Activated CD4-positive, alpha-beta T cell treated with anti-CD3 and anti-CD28 coated beads for 36 hours (primary cell): ENCODE measurements at regions of chr13 and their contacts with region 1.

Region 1: GRCh38 chr13:23579072-23579895 is 9.1 kb downstream of the TNFRSF19 start:
- DNase-seq: peak; percentile 96
- ATAC-seq: peak; percentile 95
- H3K4me3 Mint-ChIP-seq: peak overlapping the region; percentile 71
- H3K27ac Mint-ChIP-seq: no peak overlapping the region
- H3K4me1 Mint-ChIP-seq: peaks cover 24% of the 10 kb centered on the region
- H3K27me3 Mint-ChIP-seq: peaks cover 33% of the 10 kb centered on the region

Region 2: GRCh38 chr13:23455392-23456185 is 123.7 kb before region 1 on chr13:
- CTCF ChIA-PET with region 1: no interaction called
- POLR2A ChIA-PET with region 1: no interaction called
- intact Hi-C with region 1: no loop called
- DNase-seq: no peak
- ATAC-seq: no peak
- H3K4me3 Mint-ChIP-seq: no peak overlapping the region
- H3K27ac Mint-ChIP-seq: no peak overlapping the region
- H3K4me1 Mint-ChIP-seq: no peaks in the 10 kb centered on the region
- H3K27me3 Mint-ChIP-seq: no peaks in the 10 kb centered on the region

Region 3: GRCh38 chr13:23466144-23467002 is 112.9 kb before region 1 on chr13:
- CTCF ChIA-PET with region 1: interaction called, 4 read pairs
- POLR2A ChIA-PET with region 1: no interaction called
- intact Hi-C with region 1: loop called (anchors 1 to 2 kb)
- DNase-seq: peak; percentile 78
- ATAC-seq: peak; percentile 92
- H3K4me3 Mint-ChIP-seq: peak overlapping the region; percentile 54
- H3K27ac Mint-ChIP-seq: no peak overlapping the region
- H3K4me1 Mint-ChIP-seq: peaks cover 12% of the 10 kb centered on the region
- H3K27me3 Mint-ChIP-seq: peaks cover 5% of the 10 kb centered on the region

Region 4: GRCh38 chr13:23752111-23753001 is 173.1 kb after region 1 on chr13:
- CTCF ChIA-PET with region 1: no interaction called
- POLR2A ChIA-PET with region 1: no interaction called
- intact Hi-C with region 1: loop called in 1 of 2 experiments (anchors 2 kb)
- DNase-seq: no peak
- ATAC-seq: peak; percentile 78
- H3K4me3 Mint-ChIP-seq: no peak overlapping the region
- H3K27ac Mint-ChIP-seq: no peak overlapping the region
- H3K4me1 Mint-ChIP-seq: peaks cover 44% of the 10 kb centered on the region
- H3K27me3 Mint-ChIP-seq: peaks cover 3% of the 10 kb centered on the region

Region 5: GRCh38 chr13:23871616-23872220 is 292.4 kb after region 1 on chr13:
- CTCF ChIA-PET with region 1: no interaction called
- POLR2A ChIA-PET with region 1: no interaction called
- intact Hi-C with region 1: loop called in 1 of 2 experiments (anchors 5 kb)
- DNase-seq: no peak
- ATAC-seq: no peak
- H3K4me3 Mint-ChIP-seq: no peak overlapping the region
- H3K27ac Mint-ChIP-seq: no peak overlapping the region
- H3K4me1 Mint-ChIP-seq: no peaks in the 10 kb centered on the region
- H3K27me3 Mint-ChIP-seq: no peaks in the 10 kb centered on the region

Region 6: GRCh38 chr13:23966691-23967615 is 387.7 kb after region 1 on chr13:
- CTCF ChIA-PET with region 1: no interaction called
- POLR2A ChIA-PET with region 1: no interaction called
- intact Hi-C with region 1: loop called in 1 of 2 experiments (anchors 2 kb)
- DNase-seq: peak; percentile 6
- ATAC-seq: peak; percentile 79
- H3K4me3 Mint-ChIP-seq: peak overlapping the region; percentile 63
- H3K27ac Mint-ChIP-seq: peak overlapping the region; percentile 79
- H3K4me1 Mint-ChIP-seq: peaks cover 37% of the 10 kb centered on the region
- H3K27me3 Mint-ChIP-seq: no peaks in the 10 kb centered on the region

Region 7: DNA sequence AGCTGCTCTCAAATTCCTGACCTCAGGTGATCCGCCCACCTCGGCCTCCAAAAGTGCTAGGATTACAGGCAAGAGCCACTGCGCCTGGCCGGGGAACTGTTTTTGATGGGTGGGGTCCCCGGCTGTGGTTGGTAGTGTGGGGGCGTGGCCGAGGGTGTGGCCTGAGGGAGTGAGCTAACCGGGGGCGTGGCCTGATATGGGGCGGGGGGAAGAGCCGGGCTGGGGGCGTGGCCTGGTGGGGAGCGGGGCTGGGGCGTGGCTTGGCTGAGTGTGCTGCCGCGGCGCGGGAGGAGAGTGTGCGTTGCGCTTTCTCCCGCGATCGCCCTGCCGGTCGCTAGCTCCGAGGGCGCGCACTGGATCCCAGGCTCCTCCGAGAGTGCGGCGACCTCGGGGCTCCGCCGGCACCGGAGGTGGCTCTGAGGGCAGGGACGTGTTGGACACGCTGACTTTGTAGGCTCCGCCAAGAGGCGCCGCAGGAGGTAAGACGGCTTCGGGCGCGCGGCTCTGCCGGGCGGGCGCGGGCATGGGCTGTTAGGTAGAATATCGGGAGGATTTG is 581.2 kb after region 1 on chr13 and contains the start of gene SPATA13:
- CTCF ChIA-PET with region 1: no interaction called
- POLR2A ChIA-PET with region 1: no interaction called
- intact Hi-C with region 1: loop called in 1 of 2 experiments (anchors 1 kb)
- DNase-seq: peak; percentile 97
- ATAC-seq: peak; percentile 95
- H3K4me3 Mint-ChIP-seq: peak within 1 kb of the TSS; percentile 83
- H3K27ac Mint-ChIP-seq: no peak within 1 kb of the TSS
- H3K4me1 Mint-ChIP-seq: peaks cover 12% of the 10 kb centered on the region
- H3K27me3 Mint-ChIP-seq: peaks cover 9% of the 10 kb centered on the region
- total RNA-seq, gene SPATA13: 47.6 to 51.5 TPM